MCF 10A (cell line): ENCODE measurements at regions of chr11 and their contacts with region 1.

Region 1: DNA sequence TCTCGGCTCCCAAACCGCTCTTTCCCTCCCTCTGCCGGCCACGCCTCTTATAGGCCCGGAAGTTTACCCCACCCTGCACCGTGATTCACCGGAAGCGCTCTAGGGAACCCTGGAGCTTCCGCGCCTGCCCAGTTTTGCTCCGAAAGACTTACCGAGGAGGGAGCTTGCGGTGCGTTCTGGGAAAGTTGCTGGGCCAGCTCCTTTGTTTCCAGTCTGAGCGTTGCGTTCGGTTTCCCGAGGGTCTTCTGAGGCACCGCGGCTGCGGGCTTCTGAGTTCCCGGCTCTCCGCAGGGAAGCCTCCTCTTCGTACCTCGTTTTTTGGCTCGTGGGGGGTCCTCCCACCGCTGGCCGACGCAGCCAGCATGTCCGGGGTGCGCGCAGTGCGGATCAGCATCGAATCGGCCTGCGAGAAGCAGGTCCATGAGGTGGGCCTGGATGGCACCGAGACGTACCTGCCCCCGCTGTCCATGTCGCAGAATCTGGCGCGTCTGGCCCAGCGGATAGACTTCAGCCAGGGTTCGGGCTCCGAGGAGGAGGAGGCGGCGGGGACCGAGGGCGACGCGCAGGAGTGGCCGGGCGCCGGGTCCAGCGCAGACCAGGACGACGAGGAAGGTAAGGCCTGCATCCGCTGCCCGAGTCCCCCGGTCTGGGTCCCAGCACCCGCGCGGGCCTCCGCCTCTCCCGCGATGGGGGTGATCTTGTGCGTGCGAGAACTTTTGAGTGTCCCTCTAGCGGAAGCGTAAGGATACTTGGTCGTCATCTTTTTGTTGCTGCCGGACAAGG is at the start of gene MED17:
- DNase-seq: peak; percentile 95
- H3K4me3 Mint-ChIP-seq: peak within 1 kb of the TSS; percentile 84
- H3K27ac Mint-ChIP-seq: peak within 1 kb of the TSS; percentile 95
- H3K4me1 Mint-ChIP-seq: peaks cover 24% of the 10 kb centered on the region
- H3K27me3 Mint-ChIP-seq: no peaks in the 10 kb centered on the region
- CTCF ChIP-seq: peak; percentile 19
- total RNA-seq, gene MED17: 42.2 and 43.9 TPM in 2 replicates

Region 2: GRCh38 chr11:93736129-93736528 is 48.2 kb before region 1 on chr11:
- CTCF ChIA-PET with region 1: interaction called, 9 read pairs
- POLR2A ChIA-PET with region 1: interaction called, 169 read pairs
- intact Hi-C with region 1: loop called (anchors 1 kb)
- DNase-seq: peak; percentile 23
- H3K4me3 Mint-ChIP-seq: peak overlapping the region; percentile 35
- H3K27ac Mint-ChIP-seq: peak overlapping the region; percentile 35
- H3K4me1 Mint-ChIP-seq: peaks cover 34% of the 10 kb centered on the region
- H3K27me3 Mint-ChIP-seq: no peaks in the 10 kb centered on the region
- CTCF ChIP-seq: no peak

Region 3: DNA sequence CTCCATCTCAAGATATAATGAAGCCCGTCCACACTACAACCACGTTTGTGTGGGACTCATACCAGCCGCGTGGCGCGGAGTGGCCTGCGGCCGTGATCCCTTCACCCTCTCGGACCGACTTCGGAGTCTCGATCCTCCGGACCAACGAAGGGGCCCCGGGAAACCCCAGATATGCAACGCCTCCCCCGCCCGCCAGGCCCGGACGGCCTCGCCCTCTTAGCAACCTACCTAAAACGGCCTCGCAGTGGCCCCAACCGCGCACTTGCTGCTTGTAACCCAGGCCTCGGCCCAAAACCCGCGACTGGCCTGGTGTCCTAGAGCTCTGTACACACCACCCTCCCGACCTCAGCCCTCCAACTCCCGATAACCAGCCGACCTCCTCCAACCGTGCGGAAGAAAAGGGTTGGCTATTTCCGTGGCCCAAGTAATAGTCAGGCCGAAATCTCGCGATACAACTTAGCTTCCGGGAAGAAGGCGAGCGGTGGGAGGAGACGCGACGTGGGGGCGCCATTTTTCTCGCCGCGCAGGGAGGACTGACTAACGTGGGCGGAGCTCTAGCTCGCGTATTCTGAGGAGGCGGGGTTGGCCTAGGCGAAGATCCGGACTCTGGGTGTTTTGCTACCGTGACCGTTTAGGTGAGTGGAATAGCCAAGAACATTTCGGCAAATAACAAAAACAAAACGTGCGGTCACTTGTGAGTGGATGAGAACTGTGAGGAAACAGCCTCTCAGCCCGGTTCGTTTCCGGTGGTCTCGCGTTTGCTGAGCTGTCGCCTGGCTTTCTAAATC is 43.1 kb before region 1 on chr11 and contains the starts of genes C11orf54 and TAF1D:
- CTCF ChIA-PET with region 1: interaction called, 9 read pairs
- POLR2A ChIA-PET with region 1: interaction called, 169 read pairs
- intact Hi-C with region 1: loop called (anchors 1 kb)
- DNase-seq: peak; percentile 99
- H3K4me3 Mint-ChIP-seq: peak within 1 kb of the TSS; percentile 98
- H3K27ac Mint-ChIP-seq: peak within 1 kb of the TSS; percentile 99
- H3K4me1 Mint-ChIP-seq: peaks cover 37% of the 10 kb centered on the region
- H3K27me3 Mint-ChIP-seq: no peaks in the 10 kb centered on the region
- CTCF ChIP-seq: no peak
- total RNA-seq, gene C11orf54: 13.8 and 23.1 TPM in 2 replicates
- total RNA-seq, gene TAF1D: 165 and 212 TPM in 2 replicates

Region 4: GRCh38 chr11:93773045-93773477 is 11.3 kb before region 1 on chr11:
- CTCF ChIA-PET with region 1: interaction called, 4 read pairs
- POLR2A ChIA-PET with region 1: interaction called, 27 read pairs
- intact Hi-C with region 1: no loop called
- DNase-seq: no peak
- H3K4me3 Mint-ChIP-seq: no peak overlapping the region
- H3K27ac Mint-ChIP-seq: no peak overlapping the region
- H3K4me1 Mint-ChIP-seq: no peaks in the 10 kb centered on the region
- H3K27me3 Mint-ChIP-seq: no peaks in the 10 kb centered on the region
- CTCF ChIP-seq: no peak

Region 5: GRCh38 chr11:93796441-93797231 is 12.3 kb after region 1 on chr11:
- CTCF ChIA-PET with region 1: interaction called, 7 read pairs
- POLR2A ChIA-PET with region 1: interaction called, 12 read pairs
- intact Hi-C with region 1: no loop called
- DNase-seq: no peak
- H3K4me3 Mint-ChIP-seq: no peak overlapping the region
- H3K27ac Mint-ChIP-seq: no peak overlapping the region
- H3K4me1 Mint-ChIP-seq: no peaks in the 10 kb centered on the region
- H3K27me3 Mint-ChIP-seq: no peaks in the 10 kb centered on the region
- CTCF ChIP-seq: no peak

Region 6: GRCh38 chr11:94537031-94537600 is 752.8 kb after region 1 on chr11:
- CTCF ChIA-PET with region 1: no interaction called
- POLR2A ChIA-PET with region 1: no interaction called
- intact Hi-C with region 1: no loop called
- DNase-seq: peak; percentile 28
- H3K4me3 Mint-ChIP-seq: peak overlapping the region; percentile 2
- H3K27ac Mint-ChIP-seq: no peak overlapping the region
- H3K4me1 Mint-ChIP-seq: peaks cover 36% of the 10 kb centered on the region
- H3K27me3 Mint-ChIP-seq: no peaks in the 10 kb centered on the region
- CTCF ChIP-seq: no peak